Heart right ventricle (tissue), 16 donors: ENCODE measurements at regions of chr12 and their contacts with region 1.

Region 1: DNA sequence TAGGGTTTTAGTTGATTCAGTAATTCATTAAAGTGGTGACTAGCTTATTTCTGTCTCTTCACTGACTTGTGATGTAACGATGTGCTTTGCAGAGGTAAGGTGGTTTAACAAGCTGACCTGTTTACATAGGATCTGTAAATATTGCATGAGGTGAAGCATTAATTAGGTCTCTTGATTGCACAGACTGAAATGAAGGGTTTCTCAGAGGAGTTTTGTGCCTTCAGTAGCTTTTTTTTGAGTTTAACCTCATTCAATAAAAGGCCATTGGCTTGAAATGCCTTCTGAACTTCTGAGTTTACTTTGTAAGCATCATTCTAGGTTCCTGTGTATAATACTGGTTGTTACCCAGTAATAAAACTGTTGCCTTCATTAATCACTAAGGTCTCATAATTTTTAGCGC is 1064.4 kb downstream of the SLC16A7 start:
- DNase-seq: no peak
- ATAC-seq: no peak
- H3K4me3 ChIP-seq: no peak overlapping the region
- H3K27ac ChIP-seq: no peak overlapping the region
- H3K4me1 ChIP-seq: no peaks in the 10 kb centered on the region
- H3K27me3 ChIP-seq: no peaks in the 10 kb centered on the region
- CTCF ChIP-seq: no peak

Region 2: GRCh38 chr12:60240891-60241290 is 419.4 kb before region 1 on chr12:
- intact Hi-C with region 1: loop called in 1 of 10 experiments (anchors 10 kb)
- DNase-seq: no peak
- ATAC-seq: no peak
- H3K4me3 ChIP-seq: no peak overlapping the region
- H3K27ac ChIP-seq: no peak overlapping the region
- H3K4me1 ChIP-seq: no peaks in the 10 kb centered on the region
- H3K27me3 ChIP-seq: no peaks in the 10 kb centered on the region
- CTCF ChIP-seq: no peak